Breast epithelium (tissue), 4 donors: ENCODE measurements at regions of chr12 and their contacts with region 1.

Region 1: GRCh38 chr12:12859690-12860089 is 31.7 kb upstream of the GPRC5A start:
- DNase-seq: no peak
- H3K4me3 ChIP-seq: no peak overlapping the region
- H3K27ac ChIP-seq: no peak overlapping the region
- H3K4me1 ChIP-seq: no peaks in the 10 kb centered on the region
- H3K27me3 ChIP-seq: no peaks in the 10 kb centered on the region
- CTCF ChIP-seq: no peak
- POLR2A ChIP-seq: no peak

Region 2: DNA sequence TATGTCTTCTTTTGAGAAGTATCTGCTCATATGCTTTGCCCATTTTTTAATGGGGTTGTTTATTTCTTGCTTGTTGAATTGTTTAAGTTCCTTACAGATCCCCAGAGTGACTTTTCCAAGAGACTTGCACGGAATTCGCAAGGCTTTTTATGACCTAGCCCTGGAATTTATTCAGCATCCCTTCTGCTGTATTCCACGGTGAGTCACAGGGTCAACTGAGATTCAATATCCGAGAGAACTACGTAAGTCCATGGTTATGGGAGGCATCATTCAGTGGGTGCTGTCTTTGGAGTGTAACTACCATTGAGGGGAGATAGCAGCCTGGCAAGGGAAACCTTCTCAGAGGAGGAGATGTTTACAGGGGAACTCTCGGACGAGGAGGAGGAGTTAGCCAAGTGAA is 10.8 kb after region 1 on chr12:
- intact Hi-C with region 1: loop called (anchors 1 kb)
- DNase-seq: no peak
- H3K4me3 ChIP-seq: no peak overlapping the region
- H3K27ac ChIP-seq: no peak overlapping the region
- H3K4me1 ChIP-seq: no peaks in the 10 kb centered on the region
- H3K27me3 ChIP-seq: no peaks in the 10 kb centered on the region
- CTCF ChIP-seq: no peak
- POLR2A ChIP-seq: no peak